Dendritic cell treated with granulocyte-macrophage colony-stimulating factor and Interleukin-4, amounts not matched to agents 40 ng/mL and 50 ng/mL, for 4 days (primary cell): ENCODE measurements at regions of chr12 and their contacts with region 1.

Region 1: DNA sequence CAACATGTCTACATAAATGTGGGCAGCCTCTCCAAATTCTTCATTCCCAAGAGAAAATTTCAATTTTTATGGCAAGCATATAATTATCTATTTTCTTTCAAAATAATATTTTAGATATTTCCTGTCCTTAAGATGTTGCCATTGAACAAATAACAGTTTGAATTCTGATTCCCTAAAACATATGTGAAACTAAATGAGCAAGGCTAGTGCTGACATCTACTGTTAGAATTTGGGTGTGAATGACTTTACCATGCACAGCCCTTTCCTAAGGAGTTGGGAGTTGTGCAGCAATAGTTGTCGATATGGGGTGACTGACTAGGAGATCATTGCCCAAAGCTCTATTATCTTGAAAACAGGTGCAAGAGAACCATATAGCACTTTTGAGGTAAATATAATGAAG is 108.2 kb upstream of the SLC38A4 start:
- H3K4me3 Mint-ChIP-seq: no peak overlapping the region
- H3K27ac Mint-ChIP-seq: no peak overlapping the region
- H3K4me1 Mint-ChIP-seq: no peaks in the 10 kb centered on the region
- H3K27me3 Mint-ChIP-seq: no peaks in the 10 kb centered on the region

Region 2: DNA sequence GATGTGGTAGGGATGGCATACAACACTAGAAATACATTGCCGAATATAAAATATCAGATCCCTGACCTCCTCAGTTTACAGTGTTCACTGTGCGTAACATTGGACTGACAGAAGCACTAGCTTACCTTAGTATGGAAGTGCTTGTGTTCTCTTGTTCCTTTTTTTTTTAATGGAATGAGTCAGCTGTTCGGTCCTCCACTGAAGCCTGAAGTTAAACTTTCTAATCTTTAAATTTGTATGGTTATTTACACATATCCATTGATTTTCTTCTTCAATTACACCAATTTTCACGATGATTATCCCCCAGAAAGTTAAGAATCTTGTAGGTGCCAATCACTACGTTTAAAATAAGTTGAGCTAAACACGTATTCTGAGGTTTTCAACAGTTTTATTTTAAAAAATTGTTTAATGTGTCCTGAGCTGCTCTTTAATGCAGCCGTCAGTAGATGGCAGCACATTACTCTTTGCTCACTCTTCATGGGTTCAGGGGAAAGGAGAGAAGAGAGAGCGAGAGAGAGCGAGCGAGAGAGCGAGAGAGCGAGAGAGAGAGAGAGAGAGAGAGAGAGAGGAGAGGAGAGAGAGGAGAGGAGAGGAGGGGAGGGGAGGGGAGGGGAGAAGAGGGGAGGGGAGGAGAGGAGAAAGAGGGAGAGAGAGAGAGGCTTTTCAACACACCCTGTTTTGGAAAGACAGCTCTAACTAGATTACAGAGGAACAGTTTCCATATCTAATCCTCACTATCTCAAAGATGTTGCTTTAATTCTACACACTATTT is 808.9 kb before region 1 on chr12:
- intact Hi-C with region 1: loop called (anchors 10 kb)
- H3K4me3 Mint-ChIP-seq: peak overlapping the region; percentile 18
- H3K27ac Mint-ChIP-seq: no peak overlapping the region
- H3K4me1 Mint-ChIP-seq: peaks cover 7% of the 10 kb centered on the region
- H3K27me3 Mint-ChIP-seq: peaks cover 7% of the 10 kb centered on the region

Region 3: DNA sequence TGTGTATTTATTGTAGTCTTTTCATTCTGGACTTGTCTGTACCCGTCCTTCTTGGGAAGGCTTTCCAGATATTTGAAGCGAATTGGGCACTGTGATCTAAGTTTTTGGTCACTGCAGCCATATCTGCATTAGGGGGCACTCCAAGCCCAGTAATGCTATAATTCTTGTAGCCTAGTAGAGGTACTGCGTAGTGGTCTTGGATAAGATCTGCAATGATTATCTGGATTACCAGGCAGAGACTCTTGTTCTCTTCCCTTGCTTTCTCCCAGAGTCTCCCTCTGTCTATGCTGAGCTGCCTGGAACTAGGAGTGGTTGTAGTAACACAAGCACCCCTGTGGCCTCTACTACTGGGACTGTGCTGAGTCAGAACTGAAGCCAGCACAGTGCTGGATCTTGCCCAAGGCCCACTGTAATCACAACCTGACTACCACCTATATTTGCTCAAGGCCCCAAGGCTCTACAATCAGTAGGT is 591.3 kb before region 1 on chr12:
- intact Hi-C with region 1: loop called (anchors 5 kb)
- H3K4me3 Mint-ChIP-seq: no peak overlapping the region
- H3K27ac Mint-ChIP-seq: no peak overlapping the region
- H3K4me1 Mint-ChIP-seq: no peaks in the 10 kb centered on the region
- H3K27me3 Mint-ChIP-seq: peaks cover 2% of the 10 kb centered on the region

Region 4: GRCh38 chr12:46675736-46676135 is 258.2 kb before region 1 on chr12:
- intact Hi-C with region 1: loop called (anchors 1 kb)
- H3K4me3 Mint-ChIP-seq: no peak overlapping the region
- H3K27ac Mint-ChIP-seq: no peak overlapping the region
- H3K4me1 Mint-ChIP-seq: peaks cover 6% of the 10 kb centered on the region
- H3K27me3 Mint-ChIP-seq: no peaks in the 10 kb centered on the region